Activated CD4-positive, alpha-beta memory T cell treated with anti-CD3 and anti-CD28 coated beads for 36 hours (primary cell): ENCODE measurements at regions of chr17 and their contacts with region 1.

Region 1: GRCh38 chr17:4939796-4940624 is at the starts of genes RNF167 and SLC25A11:
- DNase-seq: peak; percentile 97
- H3K4me3 Mint-ChIP-seq: peak within 1 kb of the TSS; percentile 90
- H3K27ac Mint-ChIP-seq: peak within 1 kb of the TSS; percentile 95
- H3K4me1 Mint-ChIP-seq: peaks cover 48% of the 10 kb centered on the region
- H3K27me3 Mint-ChIP-seq: peaks cover 1% of the 10 kb centered on the region
- total RNA-seq, gene RNF167: 130 to 157 TPM
- total RNA-seq, gene SLC25A11: 70.5 to 72.5 TPM

Region 2: DNA sequence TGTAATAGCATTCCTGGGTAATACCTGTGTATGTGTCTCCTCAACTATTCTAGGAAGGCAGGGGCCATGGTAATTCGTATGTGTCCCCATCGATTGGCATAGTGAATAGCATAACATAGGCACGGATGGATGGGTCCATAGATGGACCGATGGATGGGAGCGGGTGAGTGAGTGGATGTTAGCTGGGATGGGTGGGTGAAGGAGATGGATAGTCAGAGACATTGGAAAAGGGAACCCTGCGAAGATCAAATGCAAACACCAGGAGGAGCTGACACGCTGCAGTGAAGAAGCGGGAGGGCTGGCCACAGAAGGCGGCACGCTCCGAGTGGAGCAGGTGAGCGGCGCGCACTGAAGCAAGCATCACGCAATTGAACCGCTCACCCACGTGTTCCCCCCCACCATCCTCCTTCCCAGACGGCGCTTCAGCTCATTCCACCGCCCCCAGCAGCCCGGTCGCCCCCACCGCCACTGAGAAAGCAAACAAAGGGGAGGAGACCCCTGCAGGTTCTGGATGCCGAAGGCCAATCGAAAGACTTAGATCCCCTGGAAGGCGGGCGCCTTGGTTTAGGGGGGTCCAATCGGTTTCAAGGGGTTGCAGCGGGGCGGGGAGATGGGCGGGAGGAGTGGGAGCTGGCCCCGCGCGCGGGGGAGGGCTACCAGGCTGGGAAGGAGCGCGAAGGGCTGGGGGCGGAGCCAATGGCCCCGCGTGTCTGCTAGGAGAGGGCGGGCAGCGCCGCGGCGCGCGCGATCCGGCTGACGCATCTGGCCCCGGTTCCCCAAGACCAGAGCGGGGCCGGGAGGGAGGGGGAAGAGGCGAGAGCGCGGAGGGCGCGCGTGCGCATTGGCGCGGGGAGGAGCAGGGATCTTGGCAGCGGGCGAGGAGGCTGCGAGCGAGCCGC is 230.0 kb before region 1 on chr17 and contains the start of gene ARRB2:
- CTCF ChIA-PET with region 1: interaction called, 4 read pairs
- POLR2A ChIA-PET with region 1: no interaction called
- intact Hi-C with region 1: loop called (anchors 2 kb)
- DNase-seq: peak; percentile 99
- H3K4me3 Mint-ChIP-seq: peak within 1 kb of the TSS; percentile 98
- H3K27ac Mint-ChIP-seq: peak within 1 kb of the TSS; percentile 94
- H3K4me1 Mint-ChIP-seq: peaks cover 55% of the 10 kb centered on the region
- H3K27me3 Mint-ChIP-seq: no peaks in the 10 kb centered on the region
- total RNA-seq, gene ARRB2: 210 to 226 TPM

Region 3: GRCh38 chr17:4881761-4882555 is 58.1 kb before region 1 on chr17:
- CTCF ChIA-PET with region 1: no interaction called
- POLR2A ChIA-PET with region 1: no interaction called
- intact Hi-C with region 1: no loop called
- DNase-seq: peak; percentile 74
- H3K4me3 Mint-ChIP-seq: no peak overlapping the region
- H3K27ac Mint-ChIP-seq: no peak overlapping the region
- H3K4me1 Mint-ChIP-seq: no peaks in the 10 kb centered on the region
- H3K27me3 Mint-ChIP-seq: no peaks in the 10 kb centered on the region

Region 4: DNA sequence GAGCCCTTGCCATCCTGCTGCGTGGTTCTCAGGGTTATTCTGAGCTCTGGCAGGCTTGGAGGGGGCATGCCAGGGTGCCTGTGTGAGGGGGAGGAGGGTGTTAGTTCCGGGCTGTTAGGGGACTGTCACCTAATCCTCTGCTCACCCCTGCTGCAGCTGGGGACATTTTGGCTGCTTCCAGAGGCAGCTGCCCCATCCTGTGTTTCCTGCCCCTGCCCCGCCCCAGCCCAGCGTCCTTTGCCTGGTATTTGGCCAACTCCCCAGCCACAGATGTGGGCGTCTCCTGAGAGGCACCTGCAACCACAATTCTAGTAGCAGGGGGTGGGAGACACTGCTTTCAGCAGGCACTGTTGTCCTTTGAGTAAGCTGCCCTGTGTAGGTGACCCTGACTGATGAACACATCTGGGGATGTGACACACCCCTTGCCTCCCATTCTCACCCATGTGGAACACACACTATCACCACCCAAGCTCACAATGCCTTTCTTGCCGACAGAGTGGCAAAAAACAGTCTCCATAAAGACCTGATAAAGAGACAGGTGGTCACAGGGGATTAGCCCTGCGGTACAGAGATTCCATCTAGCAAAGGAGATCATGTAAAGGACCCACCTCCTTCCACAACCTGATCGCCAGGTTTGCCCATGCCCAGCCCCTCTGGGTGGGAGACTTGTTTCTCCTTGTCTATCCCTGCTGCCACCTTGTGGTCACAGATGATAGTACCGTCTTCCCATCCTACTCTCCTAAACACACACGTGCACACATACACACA is 36.8 kb before region 1 on chr17 and contains the start of gene CHRNE:
- CTCF ChIA-PET with region 1: interaction called, 10 read pairs
- POLR2A ChIA-PET with region 1: interaction called, 15 read pairs
- intact Hi-C with region 1: loop called (anchors 2 kb)
- DNase-seq: peak; percentile 84
- H3K4me3 Mint-ChIP-seq: peak within 1 kb of the TSS; percentile 8
- H3K27ac Mint-ChIP-seq: peak within 1 kb of the TSS; percentile 39
- H3K4me1 Mint-ChIP-seq: peaks cover 36% of the 10 kb centered on the region
- H3K27me3 Mint-ChIP-seq: peaks cover 1% of the 10 kb centered on the region
- total RNA-seq, gene CHRNE: 0.45 to 0.56 TPM

Region 5: GRCh38 chr17:4967539-4968165 is 27.6 kb after region 1 on chr17 and contains the start of gene SPAG7:
- CTCF ChIA-PET with region 1: interaction called, 5 read pairs
- POLR2A ChIA-PET with region 1: interaction called, 346 read pairs
- intact Hi-C with region 1: loop called (anchors 1 kb)
- DNase-seq: peak; percentile 96
- H3K4me3 Mint-ChIP-seq: no peak within 1 kb of the TSS
- H3K27ac Mint-ChIP-seq: no peak within 1 kb of the TSS
- H3K4me1 Mint-ChIP-seq: peaks cover 37% of the 10 kb centered on the region
- H3K27me3 Mint-ChIP-seq: no peaks in the 10 kb centered on the region
- total RNA-seq, gene SPAG7: 60.6 to 65.8 TPM

Region 6: GRCh38 chr17:4997302-4998026 is 57.5 kb after region 1 on chr17 and contains the starts of genes INCA1 and KIF1C:
- CTCF ChIA-PET with region 1: no interaction called
- POLR2A ChIA-PET with region 1: interaction called, 6 read pairs
- intact Hi-C with region 1: loop called (anchors 2 kb)
- DNase-seq: peak; percentile 93
- H3K4me3 Mint-ChIP-seq: peak within 1 kb of the TSS; percentile 82
- H3K27ac Mint-ChIP-seq: peak within 1 kb of the TSS; percentile 42
- H3K4me1 Mint-ChIP-seq: peaks cover 20% of the 10 kb centered on the region
- H3K27me3 Mint-ChIP-seq: no peaks in the 10 kb centered on the region
- total RNA-seq, gene INCA1: 0.40 TPM in 1 of 2 experiments, not detected in the other
- total RNA-seq, gene KIF1C: 43.9 to 48.8 TPM